Common myeloid progenitor, CD34-positive (primary cell): ENCODE measurements at regions of chr5 and their contacts with region 1.

Region 1: DNA sequence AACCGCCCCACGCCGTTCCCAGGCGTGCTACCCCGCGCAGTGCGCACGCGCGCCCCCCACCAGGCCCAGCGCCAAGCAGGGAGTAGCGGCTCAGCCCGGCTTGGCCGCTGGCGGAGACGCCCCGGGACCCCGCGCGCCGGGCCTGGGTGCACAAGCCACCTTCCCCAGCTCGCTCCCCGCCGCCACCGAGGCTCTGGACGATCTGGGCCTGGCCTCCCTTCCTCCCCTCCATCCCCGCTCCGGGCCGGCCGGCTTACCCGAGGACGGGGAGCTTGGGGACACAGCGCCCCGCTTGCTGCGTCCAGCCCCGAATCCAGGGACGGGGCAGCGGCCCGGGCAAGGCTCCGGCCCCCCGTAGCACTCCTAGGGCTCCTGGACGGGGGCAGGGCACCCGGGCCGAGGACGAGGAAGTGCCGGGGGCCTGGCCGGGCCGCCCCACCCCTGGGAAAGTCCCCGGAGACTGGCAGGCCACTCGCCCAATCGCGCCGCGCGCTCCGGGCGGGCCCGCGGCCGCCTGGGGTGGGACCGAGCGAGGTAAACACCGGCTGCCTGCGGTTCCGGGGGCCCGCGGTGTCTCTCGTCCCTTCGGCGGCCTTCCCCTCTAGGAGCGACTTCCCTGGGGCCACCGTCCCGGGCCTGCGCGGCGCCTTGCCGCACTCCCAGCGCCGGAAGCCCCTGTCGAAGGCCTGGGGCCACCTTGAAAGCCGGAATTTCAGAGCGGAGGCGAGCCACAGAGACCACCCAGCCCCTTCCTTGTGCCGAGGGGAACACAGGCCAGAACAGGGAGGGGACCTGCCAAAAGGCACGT is at the start of gene TNIP1:
- DNase-seq: peak; percentile 89 to 96 (median 95)
- H3K4me3 ChIP-seq: peak within 1 kb of the TSS; percentile 77 to 90 (median 83)
- H3K27ac ChIP-seq: peak within 1 kb of the TSS; percentile 99
- H3K4me1 ChIP-seq: peaks cover 20 to 68% (median 57%) of the 10 kb centered on the region in 4 experiments
- H3K27me3 ChIP-seq: no peaks in the 10 kb centered on the region

Region 2: DNA sequence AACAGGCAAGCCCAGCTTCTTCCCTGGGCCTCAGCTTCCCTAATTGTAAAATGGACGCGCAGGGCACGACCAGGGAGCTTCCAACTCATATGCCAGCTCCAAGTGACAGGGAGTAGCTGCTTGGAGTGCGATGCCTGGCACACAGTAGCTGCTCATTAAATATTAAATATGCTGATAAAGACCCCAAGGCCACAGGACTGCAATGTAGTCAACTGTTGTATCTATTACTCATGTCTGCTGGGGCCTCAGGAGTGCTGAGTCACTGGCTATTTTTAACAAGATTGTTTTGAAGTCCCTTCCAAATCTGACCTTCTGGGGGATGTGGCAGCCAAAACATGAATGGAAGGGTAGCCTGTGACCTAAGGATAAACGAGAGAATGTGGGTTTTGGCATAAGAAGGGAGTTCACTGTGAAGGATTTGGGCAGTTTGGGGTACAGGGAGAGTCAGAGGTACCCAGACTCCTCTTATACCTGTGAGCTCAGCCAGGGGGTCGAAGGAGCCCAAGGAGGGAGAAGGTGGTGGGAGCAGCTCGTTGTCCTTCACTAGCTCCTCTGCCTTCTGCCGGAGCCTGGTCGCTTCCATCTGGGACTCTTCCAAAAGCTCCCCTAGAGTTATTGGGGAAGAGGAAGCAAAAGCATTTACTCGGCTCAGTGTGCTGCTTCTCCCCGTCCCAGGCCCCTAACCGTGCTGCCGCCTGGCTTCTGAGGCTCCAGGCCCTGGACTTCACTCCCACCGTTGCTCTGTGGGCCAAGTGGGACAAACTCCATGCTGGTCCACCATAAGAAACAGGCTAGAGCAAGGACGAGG is 17.5 kb before region 1 on chr5:
- CTCF ChIA-PET with region 1: interaction called, 18 read pairs
- POLR2A ChIA-PET with region 1: interaction called, 4 read pairs
- DNase-seq: peak in 2 of 3 donors; percentile 73 to 79
- H3K4me3 ChIP-seq: peak overlapping the region in 1 of 7 experiments; percentile 28
- H3K27ac ChIP-seq: peak overlapping the region in 1 of 2 experiments; percentile 71
- H3K4me1 ChIP-seq: peaks cover 7 to 67% (median 61%) of the 10 kb centered on the region in 4 experiments
- H3K27me3 ChIP-seq: no peaks in the 10 kb centered on the region

Region 3: GRCh38 chr5:151068433-151069197 is 12.2 kb before region 1 on chr5:
- CTCF ChIA-PET with region 1: interaction called, 12 read pairs
- POLR2A ChIA-PET with region 1: interaction called, 4 read pairs
- DNase-seq: peak in 2 of 3 donors; percentile 73 to 79
- H3K4me3 ChIP-seq: peak overlapping the region in 3 of 7 experiments; percentile 10 to 46 (median 21)
- H3K27ac ChIP-seq: peak overlapping the region in 1 of 2 experiments; percentile 72
- H3K4me1 ChIP-seq: peaks cover 9 to 48% (median 36%) of the 10 kb centered on the region in 4 experiments
- H3K27me3 ChIP-seq: no peaks in the 10 kb centered on the region